Mammary epithelial cell (primary cell): ENCODE measurements at regions of chr9 and their contacts with region 1.

Region 1: GRCh38 chr9:9603345-9603744 is 1009.5 kb downstream of the PTPRD start:
- DNase-seq: no peak
- H3K4me3 ChIP-seq: no peak overlapping the region
- H3K27ac ChIP-seq: no peak overlapping the region
- H3K4me1 ChIP-seq: no peaks in the 10 kb centered on the region
- H3K27me3 ChIP-seq: no peaks in the 10 kb centered on the region
- CTCF ChIP-seq: no peak

Region 2: DNA sequence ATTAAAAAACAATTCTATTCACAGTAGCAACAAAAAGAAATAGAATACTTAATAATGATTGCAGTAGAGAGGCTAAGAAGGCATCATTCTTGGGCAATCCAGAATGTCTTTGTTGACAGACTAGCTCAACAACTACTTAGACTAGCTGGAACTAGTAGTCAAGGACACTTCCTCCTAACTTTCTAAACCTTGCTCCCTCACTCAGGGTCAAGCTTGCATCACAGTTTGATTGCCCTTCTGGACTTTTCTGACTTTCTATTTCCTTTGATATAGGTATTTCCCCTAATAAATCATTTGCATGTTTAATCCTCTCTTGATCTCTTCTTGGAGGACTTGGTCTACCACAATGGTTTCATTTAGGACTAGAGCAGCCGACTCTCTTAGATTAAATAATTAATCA is 98.5 kb before region 1 on chr9:
- CTCF ChIA-PET with region 1: no interaction called
- dilution Hi-C with region 1: no loop called
- in situ Hi-C with region 1: no loop called
- intact Hi-C with region 1: no loop called
- DNase-seq: no peak
- H3K4me3 ChIP-seq: no peak overlapping the region
- H3K27ac ChIP-seq: no peak overlapping the region
- H3K4me1 ChIP-seq: no peaks in the 10 kb centered on the region
- H3K27me3 ChIP-seq: no peaks in the 10 kb centered on the region
- CTCF ChIP-seq: no peak

Region 3: DNA sequence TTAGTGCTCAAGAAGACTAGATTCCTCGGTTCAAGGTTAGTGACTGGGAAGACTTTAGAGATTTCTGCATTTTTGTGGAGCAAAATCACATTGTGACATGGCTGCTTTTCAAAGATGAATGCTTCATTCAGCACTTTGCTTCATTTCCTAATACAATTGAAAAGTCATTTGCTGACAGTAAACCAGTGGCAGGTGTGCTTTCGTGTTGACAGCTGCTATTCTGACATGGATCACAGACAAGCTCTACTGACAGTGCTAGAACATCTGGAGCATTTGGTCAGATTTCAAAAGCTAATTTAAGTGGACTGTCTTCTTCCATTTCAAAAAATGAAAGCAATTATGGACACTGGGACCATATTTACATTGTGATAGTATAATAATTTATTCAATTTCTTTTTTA is 50.7 kb before region 1 on chr9:
- CTCF ChIA-PET with region 1: no interaction called
- dilution Hi-C with region 1: no loop called
- in situ Hi-C with region 1: no loop called
- intact Hi-C with region 1: no loop called
- DNase-seq: no peak
- H3K4me3 ChIP-seq: no peak overlapping the region
- H3K27ac ChIP-seq: no peak overlapping the region
- H3K4me1 ChIP-seq: no peaks in the 10 kb centered on the region
- H3K27me3 ChIP-seq: no peaks in the 10 kb centered on the region
- CTCF ChIP-seq: no peak

Region 4: GRCh38 chr9:9563817-9564216 is 39.5 kb before region 1 on chr9:
- CTCF ChIA-PET with region 1: no interaction called
- dilution Hi-C with region 1: no loop called
- in situ Hi-C with region 1: no loop called
- intact Hi-C with region 1: no loop called
- DNase-seq: no peak
- H3K4me3 ChIP-seq: no peak overlapping the region
- H3K27ac ChIP-seq: no peak overlapping the region
- H3K4me1 ChIP-seq: no peaks in the 10 kb centered on the region
- H3K27me3 ChIP-seq: no peaks in the 10 kb centered on the region
- CTCF ChIP-seq: no peak

Region 5: DNA sequence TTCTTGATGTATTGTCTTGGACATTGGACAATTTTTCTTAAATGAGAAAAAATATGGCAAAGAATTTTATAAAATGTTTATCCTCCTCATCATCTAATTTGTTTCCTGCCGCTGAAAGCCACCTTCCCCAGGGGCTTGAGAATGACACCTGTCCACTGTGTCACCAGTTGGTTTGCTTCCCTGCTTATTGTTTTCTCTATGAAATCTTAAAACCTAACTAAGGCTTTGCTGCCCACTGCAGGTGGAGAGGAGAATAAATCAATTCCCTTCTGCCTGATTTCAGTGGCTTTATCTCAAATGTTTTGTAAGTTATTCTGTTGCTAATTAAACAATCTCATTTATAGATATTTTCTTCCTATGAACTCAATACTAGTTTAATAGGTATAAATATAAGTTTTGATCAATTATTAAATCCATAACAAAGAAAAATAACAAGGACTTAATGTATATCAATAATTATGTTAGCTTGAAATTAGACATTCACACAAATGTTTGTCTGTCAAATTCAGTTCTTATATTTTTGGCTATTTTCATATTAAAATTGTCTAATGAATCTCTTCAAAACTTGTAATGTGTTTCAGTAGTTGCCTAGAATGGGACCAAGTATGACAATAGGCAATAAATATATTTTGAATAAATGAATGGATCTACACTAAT is 187.0 kb after region 1 on chr9:
- CTCF ChIA-PET with region 1: no interaction called
- dilution Hi-C with region 1: no loop called
- in situ Hi-C with region 1: no loop called
- intact Hi-C with region 1: loop called (anchors 2 kb)
- DNase-seq: peak; percentile 5
- H3K4me3 ChIP-seq: no peak overlapping the region
- H3K27ac ChIP-seq: no peak overlapping the region
- H3K4me1 ChIP-seq: no peaks in the 10 kb centered on the region
- H3K27me3 ChIP-seq: no peaks in the 10 kb centered on the region
- CTCF ChIP-seq: peak; percentile 70 to 78

Region 6: GRCh38 chr9:9912459-9912858 is 309.1 kb after region 1 on chr9:
- CTCF ChIA-PET with region 1: no interaction called
- dilution Hi-C with region 1: no loop called
- in situ Hi-C with region 1: loop called in 1 of 2 experiments (anchors 25 kb)
- intact Hi-C with region 1: loop called (anchors 1 kb)
- DNase-seq: no peak
- H3K4me3 ChIP-seq: no peak overlapping the region
- H3K27ac ChIP-seq: no peak overlapping the region
- H3K4me1 ChIP-seq: no peaks in the 10 kb centered on the region
- H3K27me3 ChIP-seq: peaks cover 2% of the 10 kb centered on the region
- CTCF ChIP-seq: peak; percentile 54 to 69

Region 7: DNA sequence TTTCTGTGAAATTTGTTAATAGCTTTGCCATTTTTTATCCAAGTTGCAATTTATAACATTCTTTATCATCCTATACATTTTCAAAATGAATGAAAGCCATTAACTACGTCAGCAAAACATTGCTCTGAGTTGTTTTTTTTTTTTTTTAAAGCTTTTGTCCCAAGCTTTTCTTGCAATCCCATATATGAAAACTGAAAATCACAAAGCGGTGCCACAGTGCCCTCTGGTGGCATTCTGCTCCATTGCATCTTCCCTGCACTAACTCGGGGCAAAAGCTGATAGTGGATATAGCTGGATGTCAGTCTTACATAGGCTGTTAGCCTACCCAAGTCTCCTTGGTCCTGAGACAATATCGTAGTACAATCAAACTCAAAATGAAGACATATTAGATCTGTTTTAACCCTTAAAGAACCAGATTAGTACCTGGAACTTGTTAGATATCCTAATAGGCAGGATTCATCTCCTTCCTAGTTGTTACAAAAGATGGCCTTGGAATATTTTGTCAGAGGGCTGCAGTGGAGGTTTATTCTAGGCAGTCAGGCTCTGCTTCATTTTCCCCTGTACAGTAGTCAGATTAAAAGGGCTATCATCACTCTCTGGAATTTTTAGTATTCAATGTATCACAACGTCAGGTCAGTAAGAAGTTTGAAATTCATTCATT is 339.5 kb after region 1 on chr9:
- CTCF ChIA-PET with region 1: interaction called, 5 read pairs
- dilution Hi-C with region 1: no loop called
- in situ Hi-C with region 1: no loop called
- intact Hi-C with region 1: loop called (anchors 10 kb)
- DNase-seq: peak; percentile 51
- H3K4me3 ChIP-seq: no peak overlapping the region
- H3K27ac ChIP-seq: no peak overlapping the region
- H3K4me1 ChIP-seq: no peaks in the 10 kb centered on the region
- H3K27me3 ChIP-seq: no peaks in the 10 kb centered on the region
- CTCF ChIP-seq: peak; percentile 95